Common myeloid progenitor, CD34-positive (primary cell): ENCODE measurements at regions of chr6 and their contacts with region 1.

Region 1: GRCh38 chr6:136643850-136644596 is 93.8 kb upstream of the MAP7 start:
- DNase-seq: peak; percentile 75 to 82 (median 78)
- H3K4me3 ChIP-seq: peak overlapping the region in 1 of 7 experiments; percentile 48
- H3K27ac ChIP-seq: no peak overlapping the region
- H3K4me1 ChIP-seq: peaks cover 0 to 17% (median 3%) of the 10 kb centered on the region in 4 experiments
- H3K27me3 ChIP-seq: no peaks in the 10 kb centered on the region

Region 2: GRCh38 chr6:136344420-136344819 is 299.6 kb before region 1 on chr6:
- CTCF ChIA-PET with region 1: no interaction called
- POLR2A ChIA-PET with region 1: no interaction called
- DNase-seq: no peak
- H3K4me3 ChIP-seq: no peak overlapping the region
- H3K27ac ChIP-seq: no peak overlapping the region
- H3K4me1 ChIP-seq: peaks cover 0 to 4% (median 0%) of the 10 kb centered on the region in 4 experiments
- H3K27me3 ChIP-seq: no peaks in the 10 kb centered on the region

Region 3: DNA sequence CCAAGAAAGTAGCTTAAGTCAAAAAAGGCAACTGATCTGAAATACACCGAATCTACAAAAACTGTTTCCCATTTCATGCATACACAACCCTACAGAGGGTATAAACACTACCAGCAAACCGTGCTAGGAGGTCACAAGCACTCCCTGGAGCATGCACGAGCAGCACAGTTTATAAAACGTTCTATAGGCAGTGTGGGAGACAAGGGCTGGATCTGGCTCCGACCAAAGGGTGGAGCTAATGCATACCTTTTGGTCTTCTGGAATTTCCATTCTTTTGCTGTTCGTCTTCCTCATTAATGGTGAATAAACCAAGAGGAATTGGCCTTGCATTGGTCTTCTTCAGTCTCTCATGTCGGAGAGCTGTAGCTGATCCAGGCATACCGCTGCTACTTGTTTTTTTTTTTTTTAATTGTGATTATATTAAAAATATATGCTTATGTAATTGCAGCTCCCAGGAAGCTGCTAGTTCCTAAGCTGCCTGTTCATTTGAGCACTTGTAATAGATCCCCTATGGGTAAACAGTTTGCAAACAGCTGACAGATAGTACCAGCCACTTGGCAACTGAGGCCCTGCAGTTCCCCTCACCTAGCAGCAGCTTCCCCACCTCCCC is 118.3 kb before region 1 on chr6:
- CTCF ChIA-PET with region 1: no interaction called
- POLR2A ChIA-PET with region 1: no interaction called
- DNase-seq: peak in 1 of 3 donors; percentile 42
- H3K4me3 ChIP-seq: peak overlapping the region in 6 of 7 experiments; percentile 23 to 80 (median 66)
- H3K27ac ChIP-seq: peak overlapping the region; percentile 67 to 82
- H3K4me1 ChIP-seq: peaks cover 12 to 72% (median 50%) of the 10 kb centered on the region in 4 experiments
- H3K27me3 ChIP-seq: no peaks in the 10 kb centered on the region

Region 4: DNA sequence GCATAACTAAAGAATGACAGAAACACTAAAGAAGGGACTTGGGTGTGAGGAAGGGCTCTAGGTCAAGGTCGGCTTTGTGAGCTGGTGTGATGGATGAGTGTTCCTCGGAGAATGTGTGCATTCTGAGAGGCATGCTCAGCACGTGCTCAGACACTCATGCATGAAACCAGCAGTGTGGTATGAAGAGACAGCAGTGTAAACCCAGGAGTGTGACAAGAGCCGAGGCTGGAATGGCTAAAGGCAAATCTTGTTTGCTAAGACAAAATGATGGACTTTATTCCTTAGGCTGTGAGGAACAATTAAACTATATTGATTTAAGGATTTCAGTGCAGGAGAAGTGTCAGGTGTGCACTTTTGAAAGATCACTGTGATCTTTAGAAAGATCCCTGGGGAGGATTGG is 13.6 kb after region 1 on chr6:
- CTCF ChIA-PET with region 1: interaction called, 24 read pairs
- POLR2A ChIA-PET with region 1: no interaction called
- DNase-seq: no peak
- H3K4me3 ChIP-seq: no peak overlapping the region
- H3K27ac ChIP-seq: no peak overlapping the region
- H3K4me1 ChIP-seq: peaks cover 5 to 17% (median 7%) of the 10 kb centered on the region in 4 experiments
- H3K27me3 ChIP-seq: no peaks in the 10 kb centered on the region

Region 5: DNA sequence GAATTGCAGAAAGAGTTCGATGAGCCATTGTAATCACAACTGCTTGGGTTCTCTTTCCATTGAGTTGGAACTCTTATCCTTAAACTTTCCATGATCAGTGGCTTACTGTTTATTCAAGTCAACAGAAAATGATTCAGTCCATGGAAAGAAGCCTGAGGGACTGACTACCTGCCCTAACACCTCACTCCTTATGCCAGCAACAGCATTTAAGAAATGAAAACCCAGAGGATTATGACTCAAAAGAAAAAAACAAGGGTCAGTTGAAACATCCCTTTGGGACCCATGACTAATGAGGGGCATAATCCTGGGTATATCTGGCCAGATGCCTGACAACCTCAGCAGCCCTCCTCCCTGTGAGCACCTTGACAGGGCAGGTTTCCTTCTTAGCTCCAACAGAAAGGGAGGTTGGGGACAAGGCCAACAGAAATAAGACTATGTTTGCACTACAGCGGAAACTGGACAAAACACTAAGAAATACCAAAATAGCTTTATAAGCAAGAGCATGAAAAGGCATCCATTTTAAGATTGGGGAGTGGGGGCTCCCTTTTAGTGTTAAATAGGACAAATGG is 41.6 kb after region 1 on chr6:
- CTCF ChIA-PET with region 1: interaction called, 10 read pairs
- POLR2A ChIA-PET with region 1: no interaction called
- DNase-seq: no peak
- H3K4me3 ChIP-seq: no peak overlapping the region
- H3K27ac ChIP-seq: no peak overlapping the region
- H3K4me1 ChIP-seq: peaks cover 2 to 16% (median 12%) of the 10 kb centered on the region in 4 experiments
- H3K27me3 ChIP-seq: no peaks in the 10 kb centered on the region

Region 6: DNA sequence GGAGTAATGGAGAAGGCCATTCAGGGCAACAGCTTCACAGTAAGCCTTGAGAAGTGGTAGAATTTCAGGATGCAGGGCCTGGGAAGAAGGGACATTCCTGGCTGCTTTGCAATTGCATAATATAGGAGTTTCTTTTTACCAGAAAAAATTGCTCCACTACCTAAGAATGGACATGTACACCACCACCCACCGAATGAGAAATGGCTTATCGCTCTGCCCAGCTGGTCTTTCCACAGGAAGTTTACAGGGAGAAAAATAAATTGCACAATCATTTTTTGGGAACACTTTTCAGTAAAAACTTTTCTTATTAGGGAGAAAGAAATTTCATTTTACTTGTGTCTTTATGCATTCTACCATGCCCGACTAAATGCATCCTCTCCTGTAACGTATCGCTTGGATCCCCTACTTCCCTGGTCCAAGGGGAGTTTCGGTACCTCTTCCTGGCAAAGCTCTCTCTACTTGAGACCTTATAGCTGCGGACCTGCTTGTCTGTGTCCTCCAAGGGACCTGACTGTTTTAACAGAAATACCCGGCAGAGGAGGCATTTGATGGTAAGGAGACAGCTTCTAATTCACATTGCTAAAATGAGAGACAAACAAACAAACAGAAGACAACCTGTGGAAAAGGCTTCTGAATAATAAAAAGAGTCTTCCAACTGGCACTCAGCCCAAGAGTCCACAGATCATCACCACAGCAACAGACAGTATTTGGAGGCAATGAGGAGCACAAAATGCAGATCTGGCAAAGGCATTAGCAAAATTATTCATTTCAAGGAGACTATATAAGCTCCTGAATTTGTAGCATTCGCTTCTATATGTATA is 94.1 kb after region 1 on chr6:
- CTCF ChIA-PET with region 1: interaction called, 29 read pairs
- POLR2A ChIA-PET with region 1: no interaction called
- DNase-seq: peak; percentile 40 to 73 (median 62)
- H3K4me3 ChIP-seq: peak overlapping the region in 4 of 7 experiments; percentile 19 to 72 (median 58)
- H3K27ac ChIP-seq: peak overlapping the region; percentile 77 to 82
- H3K4me1 ChIP-seq: peaks cover 8 to 52% (median 30%) of the 10 kb centered on the region in 4 experiments
- H3K27me3 ChIP-seq: no peaks in the 10 kb centered on the region

Region 7: DNA sequence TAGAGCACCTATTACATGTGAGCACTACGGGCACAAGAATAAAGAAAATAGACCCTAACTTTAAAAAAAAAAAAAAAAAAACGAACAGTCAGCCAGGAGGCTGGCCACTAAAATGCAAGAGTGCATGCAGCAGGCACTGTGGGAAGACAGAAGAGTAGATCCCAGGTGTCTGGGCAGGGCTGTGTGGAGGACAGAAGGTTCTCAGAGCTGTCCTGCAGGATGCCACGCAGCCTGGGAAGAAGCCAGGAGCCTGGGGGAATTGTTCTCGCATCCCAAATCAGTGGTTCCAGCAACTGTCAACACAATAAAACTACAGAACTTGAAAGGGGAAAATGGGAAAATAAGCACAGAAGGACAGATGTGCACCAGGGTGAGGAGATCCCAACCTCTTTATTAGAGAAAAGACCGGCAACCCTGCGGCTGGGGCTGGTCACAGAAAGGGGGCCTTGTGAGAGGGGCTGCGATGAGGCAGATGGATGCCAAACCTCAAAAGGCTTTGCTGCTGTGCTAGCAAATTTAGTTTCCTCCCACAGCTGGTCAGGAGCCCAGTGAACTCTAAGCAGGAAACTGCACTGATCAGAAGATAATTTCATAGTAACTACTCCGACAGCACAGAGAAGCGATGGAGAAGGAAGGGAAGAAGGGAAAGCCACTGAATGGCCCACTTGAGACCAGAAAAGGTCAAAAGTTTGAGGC is 117.4 kb after region 1 on chr6:
- CTCF ChIA-PET with region 1: interaction called, 18 read pairs
- POLR2A ChIA-PET with region 1: no interaction called
- DNase-seq: peak in 2 of 3 donors; percentile 52 to 75
- H3K4me3 ChIP-seq: peak overlapping the region in 6 of 7 experiments; percentile 7 to 71 (median 52)
- H3K27ac ChIP-seq: peak overlapping the region; percentile 6 to 52
- H3K4me1 ChIP-seq: peaks cover 23 to 71% (median 58%) of the 10 kb centered on the region in 4 experiments
- H3K27me3 ChIP-seq: no peaks in the 10 kb centered on the region

Region 8: DNA sequence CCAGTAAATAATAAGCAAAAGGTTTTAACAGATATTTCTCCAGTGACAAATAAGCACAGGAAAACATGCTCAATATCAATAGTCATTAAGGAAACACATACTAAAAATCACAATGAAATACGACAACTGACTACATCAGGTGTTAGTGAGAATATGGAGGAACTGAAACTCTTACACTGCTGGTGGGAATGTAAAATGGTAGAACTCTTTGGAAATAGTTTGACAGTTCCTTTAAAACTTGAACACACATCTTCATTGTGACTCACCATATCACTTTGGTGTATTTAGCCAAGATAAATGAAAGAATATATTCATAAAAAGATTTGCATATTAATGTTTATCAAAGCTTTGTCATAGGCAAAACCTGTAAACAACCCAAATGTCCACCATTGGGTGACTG is 159.6 kb after region 1 on chr6:
- CTCF ChIA-PET with region 1: interaction called, 70 read pairs
- POLR2A ChIA-PET with region 1: no interaction called
- DNase-seq: no peak
- H3K4me3 ChIP-seq: no peak overlapping the region
- H3K27ac ChIP-seq: no peak overlapping the region
- H3K4me1 ChIP-seq: no peaks in the 10 kb centered on the region
- H3K27me3 ChIP-seq: peaks cover 0 to 2% (median 0%) of the 10 kb centered on the region in 5 experiments

Region 9: GRCh38 chr6:136927292-136927691 is 283.3 kb after region 1 on chr6:
- CTCF ChIA-PET with region 1: interaction called, 15 read pairs
- POLR2A ChIA-PET with region 1: no interaction called
- DNase-seq: peak; percentile 30 to 61 (median 57)
- H3K4me3 ChIP-seq: no peak overlapping the region
- H3K27ac ChIP-seq: no peak overlapping the region
- H3K4me1 ChIP-seq: peaks cover 0 to 15% (median 13%) of the 10 kb centered on the region in 4 experiments
- H3K27me3 ChIP-seq: peaks cover 8 to 51% (median 21%) of the 10 kb centered on the region in 5 experiments